Activated naive CD4-positive, alpha-beta T cell treated with anti-CD3 and anti-CD28 coated beads for 36 hours (primary cell): ENCODE measurements at regions of chr9 and their contacts with region 1.

Region 1: GRCh38 chr9:97982683-97983588 is at the start of gene ANP32B:
- DNase-seq: peak; percentile 96
- H3K4me3 Mint-ChIP-seq: peak within 1 kb of the TSS; percentile 82
- H3K27ac Mint-ChIP-seq: peak within 1 kb of the TSS; percentile 94
- H3K4me1 Mint-ChIP-seq: peaks cover 45% of the 10 kb centered on the region
- H3K27me3 Mint-ChIP-seq: no peaks in the 10 kb centered on the region
- total RNA-seq, gene ANP32B: 412 to 414 TPM

Region 2: DNA sequence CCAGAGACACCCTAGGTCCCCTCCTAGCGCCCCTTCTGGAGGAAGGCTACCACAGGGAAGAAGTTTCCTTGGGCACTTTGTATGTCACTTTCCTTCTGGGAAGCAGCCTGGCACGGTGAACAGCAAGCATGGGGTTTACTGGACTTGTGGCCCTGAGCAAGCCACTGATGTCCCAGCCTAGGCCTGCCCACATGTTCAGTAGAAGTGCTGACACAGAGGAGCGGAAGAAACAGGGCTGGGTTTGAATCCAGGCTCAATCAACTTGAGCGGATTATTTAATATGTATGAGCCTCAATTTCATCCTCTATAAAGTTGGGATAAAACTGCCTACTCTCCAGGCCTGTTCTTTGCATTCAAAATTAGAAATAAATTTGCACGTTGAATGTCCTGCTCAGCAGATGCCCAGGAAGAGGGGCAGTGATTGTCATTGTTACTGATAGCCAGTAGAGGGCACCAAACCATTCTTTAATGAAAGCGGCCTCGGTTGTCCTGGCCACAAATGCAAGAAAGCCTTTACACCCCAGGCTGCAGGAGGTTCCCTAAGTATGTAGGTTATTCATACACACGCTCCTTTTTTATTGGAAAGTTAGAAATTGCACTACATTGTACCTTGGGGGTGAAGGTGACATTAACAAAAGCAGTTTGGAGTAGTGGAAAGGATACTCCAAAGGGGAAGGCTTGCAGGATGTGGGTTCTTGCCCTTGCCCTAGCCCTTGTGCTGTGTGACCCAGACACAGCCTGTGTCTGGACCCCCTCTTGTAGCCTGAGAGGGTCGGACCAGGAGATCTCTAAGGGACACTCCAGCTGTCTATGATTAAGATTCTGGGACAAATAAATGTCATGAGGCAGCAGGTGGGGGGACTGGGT is 272.3 kb before region 1 on chr9:
- CTCF ChIA-PET with region 1: no interaction called
- intact Hi-C with region 1: no loop called
- DNase-seq: peak; percentile 64
- H3K4me3 Mint-ChIP-seq: no peak overlapping the region
- H3K27ac Mint-ChIP-seq: no peak overlapping the region
- H3K4me1 Mint-ChIP-seq: peaks cover 20% of the 10 kb centered on the region
- H3K27me3 Mint-ChIP-seq: peaks cover 4% of the 10 kb centered on the region

Region 3: DNA sequence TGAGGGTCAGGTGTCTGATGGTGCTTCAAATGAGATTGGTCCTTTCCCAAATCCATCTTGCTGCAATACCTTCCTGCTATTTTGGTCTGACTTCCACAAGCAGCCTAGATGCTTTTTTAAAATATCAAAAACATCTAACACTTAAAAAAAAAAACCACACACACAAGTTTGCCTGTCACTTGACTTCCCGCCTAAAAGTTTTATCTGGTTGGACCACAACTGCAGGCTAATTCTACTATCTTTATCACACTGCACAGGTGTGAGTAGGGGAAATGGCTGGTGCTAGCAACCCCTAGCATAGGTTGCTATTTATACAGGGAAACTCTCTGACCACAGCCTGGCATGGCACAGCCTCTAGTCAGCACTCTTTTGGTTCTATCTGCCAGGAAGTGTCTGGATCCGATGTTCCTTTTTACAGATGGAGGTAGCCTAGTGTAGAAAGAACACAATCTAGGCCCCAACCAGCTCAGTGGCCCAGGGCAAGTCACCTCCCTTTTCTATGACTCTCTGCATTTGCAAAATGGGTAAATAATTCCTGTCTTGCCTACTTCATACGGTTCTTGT is 44.8 kb before region 1 on chr9 and contains the start of gene HEMGN:
- CTCF ChIA-PET with region 1: no interaction called
- intact Hi-C with region 1: loop called (anchors 2 kb)
- DNase-seq: peak; percentile 72
- H3K4me3 Mint-ChIP-seq: peak within 1 kb of the TSS; percentile 48
- H3K27ac Mint-ChIP-seq: peak within 1 kb of the TSS; percentile 79
- H3K4me1 Mint-ChIP-seq: peaks cover 38% of the 10 kb centered on the region
- H3K27me3 Mint-ChIP-seq: no peaks in the 10 kb centered on the region
- total RNA-seq, gene HEMGN: 1.8 to 1.9 TPM

Region 4: DNA sequence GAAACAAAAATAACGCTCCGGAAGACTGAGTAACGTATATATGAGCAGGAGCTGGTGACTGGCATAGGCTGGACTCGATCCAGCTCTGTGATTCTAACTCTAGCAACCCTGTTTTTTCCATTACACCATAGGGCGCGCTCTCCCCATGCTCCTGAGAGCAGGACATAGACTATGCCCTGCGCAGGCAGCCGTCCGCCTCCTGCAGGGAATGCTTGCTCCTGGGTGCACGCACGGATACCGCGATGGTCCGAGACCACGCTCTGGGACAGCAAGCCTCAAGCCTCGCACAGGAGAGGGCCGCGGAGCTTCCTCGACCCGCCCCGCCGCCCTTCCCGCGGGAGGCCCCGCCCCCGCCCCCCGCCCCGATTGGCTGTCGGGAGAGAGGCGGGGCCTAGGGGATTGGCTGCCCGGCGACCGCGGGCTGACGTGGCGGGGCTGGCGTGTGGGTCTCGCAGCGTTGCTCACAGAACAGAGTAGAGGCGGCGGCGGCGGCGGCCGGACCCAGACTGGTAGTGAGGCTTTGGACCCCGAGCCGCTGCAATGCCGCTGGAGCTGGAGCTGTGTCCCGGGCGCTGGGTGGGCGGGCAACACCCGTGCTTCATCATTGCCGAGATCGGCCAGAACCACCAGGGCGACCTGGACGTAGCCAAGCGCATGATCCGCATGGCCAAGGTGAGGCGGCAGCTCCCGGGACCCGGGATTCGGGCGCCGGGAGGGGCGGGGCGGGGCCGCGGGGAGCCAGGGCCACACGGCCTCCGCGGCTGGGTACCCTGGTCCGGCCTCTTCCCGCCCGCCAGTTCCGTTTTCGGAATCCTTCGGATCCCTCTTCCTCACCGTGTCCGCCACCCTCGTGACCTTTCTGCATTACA is 73.6 kb after region 1 on chr9 and contains the start of gene NANS:
- CTCF ChIA-PET with region 1: no interaction called
- intact Hi-C with region 1: loop called (anchors 1 kb)
- DNase-seq: peak; percentile 93
- H3K4me3 Mint-ChIP-seq: peak within 1 kb of the TSS; percentile 94
- H3K27ac Mint-ChIP-seq: peak within 1 kb of the TSS; percentile 92
- H3K4me1 Mint-ChIP-seq: peaks cover 27% of the 10 kb centered on the region
- H3K27me3 Mint-ChIP-seq: no peaks in the 10 kb centered on the region
- total RNA-seq, gene NANS: 46.1 to 51.0 TPM

Region 5: GRCh38 chr9:98118640-98119601 is 136.0 kb after region 1 on chr9 and contains the start of gene TRIM14:
- CTCF ChIA-PET with region 1: no interaction called
- intact Hi-C with region 1: loop called (anchors 5 kb)
- DNase-seq: peak; percentile 60
- H3K4me3 Mint-ChIP-seq: peak within 1 kb of the TSS; percentile 81
- H3K27ac Mint-ChIP-seq: peak within 1 kb of the TSS; percentile 92
- H3K4me1 Mint-ChIP-seq: peaks cover 44% of the 10 kb centered on the region
- H3K27me3 Mint-ChIP-seq: no peaks in the 10 kb centered on the region
- total RNA-seq, gene TRIM14: 49.6 to 55.0 TPM

Region 6: GRCh38 chr9:98182069-98182820 is 199.3 kb after region 1 on chr9:
- CTCF ChIA-PET with region 1: no interaction called
- intact Hi-C with region 1: no loop called
- DNase-seq: no peak
- H3K4me3 Mint-ChIP-seq: no peak overlapping the region
- H3K27ac Mint-ChIP-seq: no peak overlapping the region
- H3K4me1 Mint-ChIP-seq: peaks cover 20% of the 10 kb centered on the region
- H3K27me3 Mint-ChIP-seq: no peaks in the 10 kb centered on the region